GM23248 (cell line): ENCODE measurements at regions of chr14 and their contacts with region 1.

Region 1: GRCh38 chr14:96424109-96424989 is 32.4 kb downstream of the AK7 start:
- DNase-seq: peak; percentile 82
- H3K4me3 ChIP-seq: peak overlapping the region; percentile 71
- H3K27ac ChIP-seq: no peak overlapping the region
- H3K4me1 ChIP-seq: no peaks in the 10 kb centered on the region
- H3K27me3 ChIP-seq: no peaks in the 10 kb centered on the region

Region 2: DNA sequence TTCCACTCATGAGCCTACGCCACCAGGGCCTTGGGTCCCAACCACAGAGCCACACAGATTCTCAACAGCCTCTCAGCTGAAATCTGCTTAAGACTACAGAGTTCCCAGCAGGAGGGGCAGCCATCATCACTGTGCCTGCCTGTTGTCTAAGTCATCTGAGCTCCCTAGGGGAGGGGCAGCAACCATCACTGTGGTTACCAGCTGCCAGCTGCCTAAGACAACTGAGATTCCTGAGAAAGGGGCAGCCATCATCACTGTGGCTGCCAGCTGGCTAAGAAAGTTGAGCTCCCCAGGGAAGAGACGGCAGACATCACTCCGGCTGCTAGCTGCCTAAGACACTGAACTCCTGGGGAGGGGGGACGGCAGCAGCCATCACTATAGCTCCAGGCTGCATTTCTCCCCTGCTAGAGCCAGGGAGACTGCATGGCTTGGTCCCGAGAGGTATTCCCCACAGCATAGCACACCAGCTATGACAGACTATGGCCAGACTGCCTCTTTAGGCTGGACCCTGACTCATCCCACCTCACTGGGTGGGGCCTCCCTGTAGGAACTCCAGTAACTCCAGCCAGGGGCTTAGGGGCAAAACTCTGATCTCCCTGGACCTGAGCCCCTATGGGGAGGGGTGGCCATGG is 422.4 kb before region 1 on chr14:
- in situ Hi-C with region 1: loop called (anchors 10 kb)
- DNase-seq: peak; percentile 61
- H3K4me3 ChIP-seq: no peak overlapping the region
- H3K27ac ChIP-seq: no peak overlapping the region
- H3K4me1 ChIP-seq: no peaks in the 10 kb centered on the region
- H3K27me3 ChIP-seq: peaks cover 23% of the 10 kb centered on the region

Region 3: GRCh38 chr14:96861568-96862310 is 437.4 kb after region 1 on chr14:
- in situ Hi-C with region 1: no loop called
- DNase-seq: no peak
- H3K4me3 ChIP-seq: no peak overlapping the region
- H3K27ac ChIP-seq: no peak overlapping the region
- H3K4me1 ChIP-seq: peaks cover 7% of the 10 kb centered on the region; the same call in 1 of the 2 replicates
- H3K27me3 ChIP-seq: no peaks in the 10 kb centered on the region